Dorsolateral prefrontal cortex (tissue), 120 donors: ENCODE measurements at regions of chr16 and their contacts with region 1.

Region 1: GRCh38 chr16:29926005-29926710 is at the start of gene KCTD13:
- DNase-seq: peak; percentile 74 to 93 (median 80)
- H3K4me3 ChIP-seq: peak within 1 kb of the TSS; percentile 57 to 100 (median 97)
- H3K27ac ChIP-seq: peak within 1 kb of the TSS; percentile 11 to 97 (median 92)
- H3K27me3 ChIP-seq: no peaks in the 10 kb centered on the region
- CTCF ChIP-seq: peak in 15 of 56 donors; percentile 5 to 43 (median 22)
- total RNA-seq, gene KCTD13: 38.6 to 87.0 (median 61.2) TPM

Region 2: DNA sequence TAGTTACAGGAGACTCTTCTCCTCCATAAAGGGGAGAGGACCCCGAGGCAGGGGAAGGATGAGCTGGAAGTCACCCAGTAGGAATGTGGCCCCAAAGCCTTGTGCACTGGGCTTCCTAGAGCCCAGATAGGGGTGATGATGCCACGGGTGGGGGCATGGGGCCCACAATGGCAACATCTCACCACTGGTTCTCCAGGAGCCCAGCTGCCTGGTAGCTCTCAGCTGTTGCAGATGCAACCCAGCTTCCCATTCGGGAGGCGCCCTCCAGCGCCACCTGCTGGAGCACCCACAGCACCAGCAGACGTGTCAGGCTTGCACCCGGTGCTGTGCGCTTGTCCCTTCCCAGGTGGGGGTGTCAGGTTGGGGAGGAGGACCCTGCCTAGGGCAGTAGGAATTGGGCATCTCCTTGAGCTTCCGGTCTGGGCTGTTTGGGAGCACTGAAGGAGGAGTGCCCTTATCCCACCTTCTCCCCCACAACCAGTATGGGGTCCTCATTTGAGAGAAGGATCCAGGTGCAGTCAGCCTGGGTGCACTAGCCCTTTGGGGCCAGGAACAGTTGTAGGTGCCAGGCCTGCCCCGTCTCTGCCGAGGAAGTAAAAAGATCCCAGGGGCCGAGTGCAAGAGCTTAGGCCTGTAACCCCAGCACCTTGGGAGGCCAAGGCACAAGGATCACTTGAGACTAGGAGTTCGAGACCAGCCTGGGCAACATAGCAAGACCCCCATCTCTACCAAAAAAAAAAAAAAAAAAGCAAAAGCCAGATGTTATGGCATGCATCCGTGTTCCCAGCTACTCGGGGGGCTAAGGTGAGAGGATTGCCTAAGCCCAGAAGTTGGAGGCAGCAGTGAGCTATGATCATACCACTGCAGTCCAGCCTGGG is 77.5 kb before region 1 on chr16:
- intact Hi-C with region 1: loop called in 1 of 2 experiments (anchors 5 kb)
- DNase-seq: peak; percentile 56 to 84 (median 74)
- H3K4me3 ChIP-seq: no peak overlapping the region
- H3K27ac ChIP-seq: peak overlapping the region in 46 of 59 donors; percentile 1 to 78 (median 52)
- H3K27me3 ChIP-seq: no peaks in the 10 kb centered on the region
- CTCF ChIP-seq: peak; percentile 37 to 96 (median 85)

Region 3: DNA sequence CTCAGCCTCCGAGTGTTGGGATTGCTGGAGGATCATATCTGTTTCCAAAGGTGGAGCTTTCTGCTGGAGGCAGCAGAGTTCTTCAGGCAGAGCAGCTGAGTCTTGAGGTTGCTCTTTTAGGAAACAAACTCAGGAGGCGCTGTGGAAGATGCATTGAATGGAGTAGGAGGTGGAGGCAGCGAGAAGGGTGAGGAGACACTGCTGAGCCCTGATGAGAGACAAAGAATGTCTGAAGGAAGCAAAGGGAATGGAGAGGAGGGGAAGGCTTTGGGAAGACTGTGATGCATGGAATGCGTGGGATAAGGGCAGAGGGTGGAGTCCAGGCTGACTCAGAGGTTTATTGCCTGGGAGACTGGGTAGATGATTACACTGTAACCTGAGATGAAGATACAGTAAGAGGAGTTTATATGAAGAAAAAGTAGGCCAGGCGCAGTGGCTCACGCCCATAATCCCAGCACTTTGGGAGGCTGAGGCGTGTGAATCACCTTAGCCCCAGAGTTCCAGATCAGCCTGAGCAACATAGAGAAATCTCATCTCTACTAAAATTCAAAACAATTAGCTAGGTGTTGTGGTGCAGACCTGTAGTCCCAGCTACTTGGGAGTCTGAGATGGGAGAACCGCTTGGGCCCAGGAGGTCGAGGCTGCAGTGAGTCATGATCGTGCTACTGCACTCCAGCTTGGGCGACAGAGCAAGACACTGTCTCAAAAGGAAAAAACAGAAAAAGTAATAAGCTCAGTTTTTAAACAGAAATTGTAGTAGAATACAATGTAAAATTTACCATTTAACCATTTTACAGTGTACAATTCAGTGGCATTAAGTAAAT is 17.9 kb after region 1 on chr16:
- intact Hi-C with region 1: no loop called
- DNase-seq: no peak
- H3K4me3 ChIP-seq: no peak overlapping the region
- H3K27ac ChIP-seq: no peak overlapping the region
- H3K27me3 ChIP-seq: no peaks in the 10 kb centered on the region
- CTCF ChIP-seq: no peak

Region 4: DNA sequence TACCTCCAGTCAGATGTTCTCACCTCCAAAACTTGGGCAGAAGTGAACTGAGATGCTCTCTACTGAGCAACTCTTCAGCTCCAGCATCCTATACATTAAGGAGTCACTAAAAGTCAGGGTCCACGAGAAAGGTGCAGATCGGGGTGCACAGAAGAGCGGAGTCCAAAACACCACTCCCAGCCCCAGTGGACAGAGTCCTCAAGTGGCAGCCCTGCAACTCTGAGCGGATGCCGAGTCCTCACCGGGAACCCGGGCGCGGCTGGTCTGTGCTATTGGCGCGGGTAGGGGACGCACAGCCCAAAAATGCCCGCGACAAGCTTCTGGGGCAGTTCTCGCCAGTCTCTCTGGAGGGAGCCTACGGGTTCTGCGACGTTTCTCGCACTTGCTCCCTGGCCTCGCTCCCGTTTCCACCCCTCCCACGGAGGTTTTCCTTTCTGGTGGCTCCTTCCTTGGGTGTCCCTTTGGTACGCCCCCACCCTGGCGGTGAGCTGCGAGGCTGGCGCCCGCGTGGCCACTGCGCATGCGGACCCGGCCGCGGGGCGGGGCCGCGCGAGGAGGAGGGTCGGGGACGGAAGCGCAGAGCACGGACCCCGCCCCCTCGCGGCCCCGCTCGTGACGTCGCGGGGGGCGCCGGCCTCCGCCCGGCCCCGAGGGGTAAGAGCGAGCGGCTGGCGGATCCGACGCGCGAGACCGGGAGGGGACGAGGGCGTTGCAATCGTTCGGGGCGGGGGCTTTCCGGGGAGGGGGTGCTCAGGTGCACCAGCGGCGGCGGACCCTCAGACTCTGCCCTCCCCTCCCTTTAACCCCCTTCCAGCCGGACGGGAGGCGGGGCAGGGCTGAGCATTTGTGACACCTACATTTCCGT is 35.6 kb after region 1 on chr16 and contains the start of gene TMEM219:
- intact Hi-C with region 1: loop called (anchors 2 to 5 kb)
- DNase-seq: peak; percentile 82 to 97 (median 86)
- H3K4me3 ChIP-seq: peak within 1 kb of the TSS; percentile 59 to 98 (median 88)
- H3K27ac ChIP-seq: peak within 1 kb of the TSS; percentile 63 to 99 (median 97)
- H3K27me3 ChIP-seq: no peaks in the 10 kb centered on the region
- CTCF ChIP-seq: peak in 53 of 56 donors; percentile 17 to 74 (median 51)
- total RNA-seq, gene TMEM219: 63.3 to 177 (median 99.3) TPM